SK-N-SH (cell line): ENCODE measurements at regions of chr9 and their contacts with region 1.

Region 1: GRCh38 chr9:126939821-126940221 is 25.2 kb downstream of the RALGPS1 start:
- DNase-seq: no peak
- H3K4me3 ChIP-seq: no peak overlapping the region
- H3K27ac ChIP-seq: no peak overlapping the region
- H3K4me1 ChIP-seq: peaks cover 0 to 4% of the 10 kb centered on the region in 2 experiments; a peak in 2 of 4 replicates
- H3K27me3 ChIP-seq: no peaks in the 10 kb centered on the region
- CTCF ChIP-seq: no peak
- EP300 ChIP-seq: no peak
- RAD21 ChIP-seq: no peak

Region 2: GRCh38 chr9:126927419-126927818 is 12.4 kb before region 1 on chr9:
- CTCF ChIA-PET with region 1: interaction called, 17 read pairs
- POLR2A ChIA-PET with region 1: no interaction called
- DNase-seq: no peak
- H3K4me3 ChIP-seq: no peak overlapping the region
- H3K27ac ChIP-seq: no peak overlapping the region
- H3K4me1 ChIP-seq: no peaks in the 10 kb centered on the region
- H3K27me3 ChIP-seq: no peaks in the 10 kb centered on the region
- CTCF ChIP-seq: no peak
- EP300 ChIP-seq: no peak
- RAD21 ChIP-seq: no peak

Region 3: DNA sequence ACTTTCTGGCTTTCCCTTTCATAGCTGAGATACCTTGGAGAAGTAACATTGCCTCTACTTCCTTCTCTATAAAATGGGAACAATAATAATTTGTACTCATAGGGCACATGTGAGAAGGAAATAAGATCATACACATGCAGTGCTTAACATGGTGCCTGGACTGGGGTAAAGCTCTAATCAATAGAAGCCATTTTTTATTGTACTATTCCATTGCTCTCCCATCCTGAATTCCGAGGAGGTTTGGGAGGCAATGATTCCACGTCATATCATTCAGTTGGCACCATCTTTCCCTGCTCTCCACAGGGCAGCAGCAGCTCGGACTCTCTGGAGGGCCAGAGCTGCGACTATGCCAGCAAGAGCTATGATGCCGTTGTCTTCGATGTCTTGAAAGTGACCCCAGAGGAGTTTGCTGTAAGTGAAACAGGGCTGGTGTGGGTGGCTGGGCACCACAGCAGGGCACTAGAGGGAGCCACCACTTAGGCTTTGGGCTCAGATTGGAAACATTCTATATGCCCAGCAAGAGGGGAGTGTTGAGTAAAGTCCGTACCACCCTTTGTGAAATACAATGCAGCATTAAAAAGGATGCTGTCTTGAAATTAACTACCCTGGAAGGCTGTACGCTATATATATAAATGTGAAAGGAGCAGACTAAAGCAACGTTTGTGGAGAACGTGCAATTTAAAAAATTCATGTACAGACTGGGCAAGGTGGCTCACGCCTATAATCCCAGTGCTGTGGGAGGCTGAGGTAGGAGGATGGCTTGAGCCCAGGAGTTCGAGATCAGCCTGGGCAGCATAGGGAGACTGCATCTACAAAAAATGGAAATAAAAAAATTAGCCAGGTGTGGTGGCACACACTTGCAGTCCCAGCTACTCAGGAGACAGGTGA is 26.0 kb after region 1 on chr9:
- CTCF ChIA-PET with region 1: interaction called, 16 read pairs
- POLR2A ChIA-PET with region 1: no interaction called
- DNase-seq: peak; percentile 73
- H3K4me3 ChIP-seq: no peak overlapping the region
- H3K27ac ChIP-seq: no peak overlapping the region
- H3K4me1 ChIP-seq: no peaks in the 10 kb centered on the region
- H3K27me3 ChIP-seq: no peaks in the 10 kb centered on the region
- CTCF ChIP-seq: peak; percentile 94
- EP300 ChIP-seq: no peak
- RAD21 ChIP-seq: peak; percentile 98

Region 4: DNA sequence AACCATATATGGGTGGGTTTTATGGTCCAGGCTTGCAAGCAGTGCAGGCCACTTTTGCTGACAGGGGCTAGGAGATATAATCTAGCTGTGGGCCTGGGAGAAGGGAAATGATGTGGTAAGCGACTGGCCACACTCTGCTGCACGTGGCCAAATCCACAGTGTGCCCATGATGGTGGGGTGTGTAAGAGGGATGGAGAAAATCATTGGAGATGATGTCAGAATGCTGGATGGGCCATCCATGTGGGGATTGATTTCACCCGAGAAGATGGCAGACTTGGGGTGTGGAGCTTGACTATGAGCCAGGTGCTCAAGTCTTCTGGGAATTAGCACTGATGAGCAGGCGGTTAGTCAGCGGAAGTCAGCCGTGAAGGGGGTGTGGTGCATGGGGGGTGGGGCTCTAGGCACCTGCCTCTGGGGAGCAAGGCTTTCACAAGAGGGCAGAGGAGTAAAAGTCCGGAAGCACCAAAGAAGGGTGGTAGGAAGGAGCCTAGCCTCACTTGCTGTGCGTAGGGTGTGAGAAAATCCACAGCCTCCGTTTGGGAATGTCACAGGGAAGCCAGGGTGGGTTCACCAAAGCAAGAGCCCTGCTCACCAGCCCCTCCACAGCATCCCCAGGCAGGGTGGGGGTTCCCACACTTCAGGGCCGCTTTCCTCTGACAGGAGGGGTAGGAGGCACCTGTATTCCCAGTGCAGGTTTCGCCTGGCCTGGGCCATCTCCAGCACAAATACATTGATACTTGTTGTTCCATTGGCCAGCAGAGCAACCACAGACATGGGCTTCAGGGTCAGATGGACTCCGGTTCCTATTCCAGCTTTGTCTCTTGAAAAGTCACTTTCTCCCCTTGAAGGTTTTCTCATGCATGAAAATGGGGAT is 227.1 kb after region 1 on chr9:
- CTCF ChIA-PET with region 1: interaction called, 12 read pairs
- POLR2A ChIA-PET with region 1: no interaction called
- DNase-seq: no peak
- H3K4me3 ChIP-seq: no peak overlapping the region
- H3K27ac ChIP-seq: no peak overlapping the region
- H3K4me1 ChIP-seq: peaks cover 20 to 31% of the 10 kb centered on the region in 2 experiments; a peak in 3 of 4 replicates
- H3K27me3 ChIP-seq: no peaks in the 10 kb centered on the region
- CTCF ChIP-seq: no peak
- EP300 ChIP-seq: no peak
- RAD21 ChIP-seq: no peak

Region 5: DNA sequence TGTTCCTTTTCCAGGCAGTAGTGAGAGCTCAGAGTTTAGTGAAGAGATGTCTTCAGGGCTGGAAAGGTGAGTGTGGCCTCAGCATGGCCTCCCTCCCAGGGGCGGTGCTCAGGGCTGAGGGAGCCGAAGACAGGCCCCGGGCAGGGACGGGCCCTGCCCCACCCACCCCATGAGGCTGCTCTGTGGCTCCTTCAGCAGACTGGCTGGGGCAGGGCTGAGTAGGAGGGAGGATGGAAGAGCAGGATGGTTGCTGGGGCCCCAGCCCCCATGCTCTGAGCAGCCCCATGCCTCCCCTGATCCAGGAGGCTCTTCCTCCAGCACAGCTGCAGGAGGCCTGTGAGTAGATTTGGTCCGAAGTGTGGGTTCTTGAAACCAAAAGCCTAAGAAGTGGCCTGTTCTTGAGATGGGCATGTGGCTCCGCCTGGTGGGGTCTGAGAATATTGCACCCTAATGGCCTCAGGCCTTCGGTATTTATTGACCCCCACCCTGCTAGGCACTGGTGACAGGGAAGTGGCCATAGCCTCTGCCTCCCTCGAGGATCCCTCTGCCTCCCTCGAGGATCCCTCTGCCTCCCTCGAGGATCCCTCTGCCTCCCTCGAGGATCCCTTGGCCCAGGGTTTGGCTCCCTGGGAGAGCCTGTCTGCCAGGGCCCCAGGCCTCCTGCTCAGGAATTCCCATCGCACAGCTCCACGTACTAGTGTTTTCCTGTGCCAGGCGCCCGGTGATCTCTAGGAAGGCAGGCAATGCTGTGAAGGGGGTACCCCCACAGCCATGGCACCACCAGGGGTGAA is 259.4 kb after region 1 on chr9:
- CTCF ChIA-PET with region 1: interaction called, 202 read pairs
- POLR2A ChIA-PET with region 1: interaction called, 3 read pairs
- DNase-seq: peak; percentile 84
- H3K4me3 ChIP-seq: peak overlapping the region in 1 of 2 experiments; percentile 27; a peak in 1 of 4 replicates
- H3K27ac ChIP-seq: no peak overlapping the region
- H3K4me1 ChIP-seq: peaks cover 0 to 34% of the 10 kb centered on the region in 2 experiments; a peak in 2 of 4 replicates
- H3K27me3 ChIP-seq: no peaks in the 10 kb centered on the region
- CTCF ChIP-seq: peak; percentile 86
- EP300 ChIP-seq: no peak
- RAD21 ChIP-seq: peak; percentile 99

Region 6: DNA sequence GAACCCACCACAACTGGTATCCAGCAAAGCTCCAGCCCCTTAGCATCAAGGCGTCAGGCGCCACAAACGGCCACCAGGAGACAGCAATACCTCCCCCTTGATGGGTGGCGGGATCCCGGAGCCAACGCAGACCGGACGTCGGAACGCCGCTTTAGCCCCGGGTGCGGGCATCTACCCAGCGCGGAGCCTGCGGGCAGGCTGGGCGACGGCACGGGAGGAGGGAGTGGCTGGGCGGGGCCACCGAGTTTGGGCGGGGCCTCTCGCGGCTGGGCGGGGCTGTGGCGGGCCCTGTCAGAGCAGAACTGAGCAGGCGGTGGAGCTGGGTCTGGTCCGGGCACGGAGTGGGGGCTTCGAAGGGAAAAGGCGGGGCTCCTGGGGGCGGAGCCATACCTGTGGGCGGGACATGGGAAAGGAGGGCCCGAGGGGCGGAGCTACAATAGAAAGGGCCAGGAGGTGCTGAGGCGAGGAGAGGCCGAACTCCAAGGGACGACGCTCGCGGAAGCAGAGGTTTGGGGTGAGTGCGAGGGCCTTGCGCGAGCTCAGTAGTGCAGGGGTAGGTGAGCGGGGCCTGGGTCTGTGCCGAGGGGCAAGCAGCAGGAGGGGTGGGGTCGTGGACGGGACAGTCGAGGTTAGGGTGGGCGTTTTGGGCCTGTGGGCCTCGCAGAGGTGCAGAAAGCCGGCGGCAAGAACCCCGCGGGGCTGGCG is 284.5 kb after region 1 on chr9:
- CTCF ChIA-PET with region 1: interaction called, 10 read pairs
- POLR2A ChIA-PET with region 1: no interaction called
- DNase-seq: peak; percentile 99
- H3K4me3 ChIP-seq: peak overlapping the region; percentile 67 to 70
- H3K27ac ChIP-seq: peak overlapping the region; percentile 59 to 89; a peak in 3 of 4 replicates
- H3K4me1 ChIP-seq: peaks cover 7 to 16% of the 10 kb centered on the region in 2 experiments; a peak in 3 of 4 replicates
- H3K27me3 ChIP-seq: no peaks in the 10 kb centered on the region
- CTCF ChIP-seq: peak; percentile 38; the same call in 1 of the 2 replicates
- EP300 ChIP-seq: no peak
- RAD21 ChIP-seq: peak; percentile 55

Region 7: DNA sequence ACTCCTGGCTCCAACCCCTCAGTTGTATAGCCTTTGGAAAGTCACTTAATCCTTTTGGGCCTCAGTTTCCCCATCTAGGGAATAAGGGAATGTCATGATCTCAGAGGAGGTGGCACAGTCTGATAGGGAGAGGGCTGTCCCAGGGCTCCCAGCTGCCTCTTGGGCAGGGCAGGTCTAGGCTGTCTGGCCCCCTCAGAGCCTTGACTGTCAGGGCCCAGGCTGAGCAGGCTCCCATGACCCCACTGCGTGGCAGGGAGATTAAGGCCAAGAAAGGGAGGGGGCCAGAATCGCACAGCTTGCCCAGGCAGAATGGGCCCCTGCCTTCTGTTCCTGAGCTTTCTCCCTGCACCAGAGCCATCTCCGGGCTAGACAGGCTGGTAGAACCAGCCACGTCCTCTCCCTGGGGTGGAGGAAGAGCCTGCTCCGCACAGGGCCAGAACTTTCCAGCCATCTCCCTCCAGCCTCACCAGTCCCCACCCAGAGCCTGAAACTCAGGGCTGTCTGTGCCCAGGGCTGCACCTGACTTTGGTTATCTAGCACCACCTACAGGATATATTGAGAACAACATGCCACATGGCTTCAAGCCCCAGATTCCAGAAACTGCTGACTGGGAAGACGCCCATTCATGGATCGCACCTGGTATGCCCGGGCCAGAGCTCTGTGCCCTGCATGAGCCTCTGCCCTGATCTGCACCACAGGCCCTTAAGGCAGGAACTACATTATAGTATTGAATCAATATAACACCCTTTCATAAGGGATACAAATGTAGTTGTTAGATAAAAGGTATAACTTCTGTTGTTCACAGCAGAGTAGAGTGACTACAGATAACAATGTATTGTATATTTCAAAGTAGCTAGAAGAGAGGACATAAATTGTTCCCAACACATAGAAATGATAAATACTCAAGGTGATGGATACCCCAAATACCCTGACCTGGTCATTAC is 1095.3 kb after region 1 on chr9:
- CTCF ChIA-PET with region 1: no interaction called
- POLR2A ChIA-PET with region 1: no interaction called
- DNase-seq: peak; percentile 82
- H3K4me3 ChIP-seq: no peak overlapping the region; a peak in 1 of 4 replicates
- H3K27ac ChIP-seq: no peak overlapping the region; a peak in 1 of 4 replicates
- H3K4me1 ChIP-seq: no peaks in the 10 kb centered on the region; a peak in 1 of 4 replicates
- H3K27me3 ChIP-seq: no peaks in the 10 kb centered on the region
- CTCF ChIP-seq: peak; percentile 72
- EP300 ChIP-seq: no peak
- RAD21 ChIP-seq: peak; percentile 96